K562 (cell line): ENCODE measurements at regions of chr17 and their contacts with region 1.

Region 1: DNA sequence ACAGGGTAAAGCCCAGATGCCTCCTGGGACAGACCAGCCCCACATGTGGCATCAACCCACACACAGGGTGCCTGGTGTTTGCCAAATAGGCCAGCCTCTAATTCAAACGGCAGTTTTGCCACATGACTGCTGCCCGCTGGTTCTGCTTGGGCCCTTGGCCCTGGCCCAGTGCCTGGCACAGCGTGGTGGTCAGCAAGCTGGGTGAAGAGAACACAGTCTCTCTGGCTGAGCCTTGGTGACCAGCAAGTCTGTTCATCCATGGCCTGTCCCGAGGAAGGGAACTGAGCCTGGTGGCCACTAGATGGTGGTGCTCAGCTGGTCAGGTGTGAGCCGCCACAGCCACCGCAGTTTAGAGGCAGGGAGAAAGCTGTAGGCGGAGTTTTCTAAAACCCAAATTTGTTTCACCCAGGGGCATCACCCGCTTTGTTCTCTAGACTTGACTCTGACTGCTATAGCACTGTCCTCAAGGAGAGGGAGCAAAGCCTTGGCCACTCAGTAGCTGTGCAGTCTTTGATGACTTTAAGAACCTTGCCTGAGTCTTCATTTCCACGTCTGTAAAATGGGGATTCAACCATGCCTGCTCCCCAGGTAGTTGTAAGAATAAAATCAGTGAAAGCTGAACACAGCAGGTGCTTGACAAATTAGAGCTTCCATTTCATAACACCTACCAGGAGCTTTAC is 4.7 kb upstream of the GFAP start:
- DNase-seq: peak; percentile 78 to 86 (median 81)
- ATAC-seq: peak; percentile 96
- H3K4me3 ChIP-seq: no peak overlapping the region
- H3K27ac ChIP-seq: no peak overlapping the region
- H3K4me1 ChIP-seq: peaks cover 2 to 12% of the 10 kb centered on the region in 2 experiments; a peak in 4 of 5 replicates
- H3K27me3 ChIP-seq: peaks cover 2 to 13% of the 10 kb centered on the region in 2 experiments; a peak in 2 of 5 replicates
- CTCF ChIP-seq: peak; percentile 93 to 95 (median 93)
- EP300 ChIP-seq: no peak
- POLR2A ChIP-seq: no peak
- RAD21 ChIP-seq: peak; percentile 84 to 92

Region 2: DNA sequence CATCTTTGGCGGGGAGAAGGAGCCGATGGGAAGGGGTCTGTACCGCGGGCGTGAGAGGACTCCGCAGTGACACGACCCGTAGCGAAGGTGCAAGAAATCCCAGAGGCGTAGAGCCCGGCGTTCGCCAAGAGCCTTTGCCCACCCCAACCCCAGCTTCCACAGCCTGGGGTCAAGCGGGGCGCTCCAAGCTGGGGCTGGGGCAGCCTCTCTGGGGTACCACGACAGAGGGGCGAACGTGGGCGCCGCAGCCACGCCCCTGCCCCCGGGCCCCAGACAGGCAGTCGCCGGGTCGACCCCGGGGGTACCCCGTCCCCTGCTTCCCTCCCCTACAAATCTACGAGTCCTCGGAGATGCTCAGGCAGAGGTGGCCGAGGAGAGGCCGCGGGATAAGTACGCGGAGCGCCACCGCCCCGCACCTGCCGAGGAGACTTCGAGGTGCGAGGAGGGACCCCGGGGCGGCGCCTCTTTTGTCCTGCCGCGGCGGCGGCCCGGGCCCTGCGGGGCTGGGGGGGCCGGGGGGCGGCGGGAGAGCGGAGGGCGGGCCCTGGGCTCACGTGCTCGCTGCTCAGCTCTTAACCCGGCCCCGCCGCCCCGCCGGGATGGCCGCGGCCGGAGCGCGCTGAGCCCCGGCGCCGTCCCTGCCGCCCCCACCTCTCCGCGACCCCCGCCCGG is 161.5 kb before region 1 on chr17 and contains the start of gene ADAM11:
- CTCF ChIA-PET with region 1: no interaction called
- POLR2A ChIA-PET with region 1: no interaction called
- in situ Hi-C with region 1: no loop called
- intact Hi-C with region 1: no loop called
- DNase-seq: peak in 3 of 4 experiments; percentile 55 to 83 (median 82)
- ATAC-seq: peak; percentile 33
- H3K4me3 ChIP-seq: no peak within 1 kb of the TSS
- H3K27ac ChIP-seq: no peak within 1 kb of the TSS
- H3K4me1 ChIP-seq: peaks cover 0 to 15% of the 10 kb centered on the region in 2 experiments; a peak in 2 of 5 replicates
- H3K27me3 ChIP-seq: peaks cover 3 to 36% of the 10 kb centered on the region in 2 experiments; a peak in 3 of 5 replicates
- CTCF ChIP-seq: no peak
- EP300 ChIP-seq: no peak
- POLR2A ChIP-seq: no peak
- RAD21 ChIP-seq: no peak
- polyA plus RNA-seq, gene ADAM11: 0.01 TPM in 1 of 2 experiments, not detected in the other

Region 3: DNA sequence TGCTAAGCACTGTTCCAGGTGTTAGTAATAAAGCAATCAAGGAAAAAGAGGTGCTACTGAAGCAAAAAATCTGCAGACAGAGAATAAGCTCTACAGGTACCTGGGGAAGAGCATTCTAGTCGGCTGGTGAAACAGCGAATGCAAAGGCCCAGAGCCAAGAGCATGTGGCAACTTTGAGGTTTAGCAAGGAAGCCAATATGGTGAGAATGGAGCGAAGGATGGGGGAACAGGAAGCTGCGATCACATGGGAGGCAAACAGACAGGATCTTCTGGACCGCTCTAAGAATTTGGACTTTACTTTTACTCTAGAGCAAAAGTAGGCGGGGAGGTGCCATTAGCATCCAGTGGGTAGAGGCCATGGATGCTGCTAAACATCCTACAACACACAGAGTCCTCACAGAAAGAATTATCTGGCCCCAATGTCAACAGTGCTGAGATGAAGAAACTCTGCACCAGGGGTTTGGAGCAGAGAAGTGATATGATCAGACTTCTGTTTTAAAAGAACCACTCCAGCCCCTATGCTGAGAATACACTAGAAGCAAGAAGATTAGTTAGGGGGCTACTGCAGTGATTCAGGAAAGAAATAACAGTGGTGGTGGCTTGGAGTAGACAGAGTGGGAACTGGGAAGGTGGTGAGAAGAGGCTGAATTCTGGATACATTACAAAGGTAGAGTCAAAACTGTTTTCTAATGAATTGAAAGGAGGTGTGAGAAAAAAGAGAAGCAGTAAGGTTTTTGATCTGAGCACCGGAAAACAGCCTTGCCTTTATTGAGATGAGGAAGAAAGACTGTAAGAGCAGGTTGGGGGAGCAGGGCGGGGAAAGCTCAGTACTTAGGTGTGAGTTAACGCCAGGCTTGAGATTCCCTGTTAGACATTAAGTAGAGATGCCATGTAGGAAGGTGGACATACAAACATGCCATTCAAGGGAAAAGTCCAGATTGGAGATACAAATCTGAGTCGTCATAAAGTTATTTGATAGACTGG is 31.8 kb before region 1 on chr17:
- CTCF ChIA-PET with region 1: no interaction called
- POLR2A ChIA-PET with region 1: no interaction called
- in situ Hi-C with region 1: no loop called
- intact Hi-C with region 1: no loop called
- DNase-seq: no peak
- ATAC-seq: no peak
- H3K4me3 ChIP-seq: no peak overlapping the region
- H3K27ac ChIP-seq: no peak overlapping the region
- H3K4me1 ChIP-seq: no peaks in the 10 kb centered on the region; a peak in 2 of 5 replicates
- H3K27me3 ChIP-seq: no peaks in the 10 kb centered on the region
- CTCF ChIP-seq: no peak
- EP300 ChIP-seq: no peak
- POLR2A ChIP-seq: no peak
- RAD21 ChIP-seq: no peak

Region 4: GRCh38 chr17:45098869-45099616 is 179.0 kb after region 1 on chr17:
- CTCF ChIA-PET with region 1: interaction called, 10 read pairs
- POLR2A ChIA-PET with region 1: interaction called, 4 read pairs
- in situ Hi-C with region 1: no loop called
- intact Hi-C with region 1: loop called (anchors 1 kb)
- DNase-seq: peak; percentile 87 to 90 (median 88)
- ATAC-seq: peak; percentile 100
- H3K4me3 ChIP-seq: no peak overlapping the region
- H3K27ac ChIP-seq: no peak overlapping the region
- H3K4me1 ChIP-seq: no peaks in the 10 kb centered on the region
- H3K27me3 ChIP-seq: no peaks in the 10 kb centered on the region
- CTCF ChIP-seq: peak; percentile 85 to 94 (median 91)
- EP300 ChIP-seq: no peak
- POLR2A ChIP-seq: no peak
- RAD21 ChIP-seq: peak; percentile 60 to 81

Region 5: DNA sequence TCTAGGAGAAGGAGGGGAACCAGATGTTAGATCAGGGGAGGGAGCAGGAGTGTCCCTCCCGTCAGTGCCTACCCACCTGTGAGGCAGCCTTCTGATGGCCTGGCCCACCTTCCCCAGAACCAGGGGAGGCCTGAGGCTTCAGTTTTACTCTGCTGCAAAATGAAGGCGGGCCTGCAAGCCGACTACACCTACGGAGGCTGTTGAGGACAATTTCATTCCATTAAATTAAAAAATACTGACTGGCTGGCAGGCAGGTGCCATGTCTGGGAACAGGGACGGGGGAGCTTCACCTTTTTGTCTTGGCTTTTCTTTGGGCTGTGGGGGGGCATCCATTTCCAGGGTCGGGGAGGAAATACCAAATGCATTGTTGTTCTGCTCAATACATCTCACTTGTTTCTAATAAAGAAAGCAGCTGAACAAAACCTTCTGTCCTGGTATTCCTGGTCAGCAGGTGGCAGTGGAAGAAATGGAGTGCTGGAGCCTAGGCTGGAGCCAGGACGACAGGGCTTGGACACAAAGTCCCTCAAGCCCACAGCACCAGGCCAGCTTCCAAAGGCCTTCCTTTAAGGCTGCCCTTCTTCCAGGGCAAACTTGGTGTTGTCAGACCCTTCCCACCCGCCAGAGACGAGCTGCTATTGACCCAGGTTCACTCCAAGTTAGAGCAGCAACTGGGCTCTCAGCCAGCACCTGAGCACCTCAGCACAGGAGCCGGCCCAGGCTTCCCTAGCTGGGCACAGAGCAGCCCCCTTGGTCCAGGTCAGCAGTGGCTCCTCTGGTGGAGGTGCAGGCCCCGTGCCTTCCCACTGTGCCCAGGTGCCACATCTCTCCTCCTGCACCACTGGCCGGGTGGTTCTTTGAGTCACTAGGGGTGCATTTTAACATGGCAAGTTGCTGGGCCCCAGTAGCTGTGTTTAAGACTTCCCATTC is 188.8 kb after region 1 on chr17:
- CTCF ChIA-PET with region 1: no interaction called
- POLR2A ChIA-PET with region 1: interaction called, 4 read pairs
- in situ Hi-C with region 1: loop called (anchors 5 kb)
- intact Hi-C with region 1: no loop called
- DNase-seq: no peak
- ATAC-seq: peak; percentile 27; the same call in 2 of the 3 replicates
- H3K4me3 ChIP-seq: no peak overlapping the region
- H3K27ac ChIP-seq: no peak overlapping the region
- H3K4me1 ChIP-seq: peaks cover 0 to 7% of the 10 kb centered on the region in 2 experiments; a peak in 1 of 5 replicates
- H3K27me3 ChIP-seq: no peaks in the 10 kb centered on the region
- CTCF ChIP-seq: peak in 1 of 3 experiments; percentile 20; a peak in 1 of 6 replicates
- EP300 ChIP-seq: no peak
- POLR2A ChIP-seq: no peak
- RAD21 ChIP-seq: peak in 1 of 2 experiments; percentile 39; a peak in 2 of 4 replicates